Activated CD8-positive, alpha-beta memory T cell treated with anti-CD3 and anti-CD28 coated beads, Interleukin-2, amount 10 ng/mL, durations not matched to agents 7 days and 5 days (primary cell): ENCODE measurements at regions of chr4 and their contacts with region 1.

Region 1: DNA sequence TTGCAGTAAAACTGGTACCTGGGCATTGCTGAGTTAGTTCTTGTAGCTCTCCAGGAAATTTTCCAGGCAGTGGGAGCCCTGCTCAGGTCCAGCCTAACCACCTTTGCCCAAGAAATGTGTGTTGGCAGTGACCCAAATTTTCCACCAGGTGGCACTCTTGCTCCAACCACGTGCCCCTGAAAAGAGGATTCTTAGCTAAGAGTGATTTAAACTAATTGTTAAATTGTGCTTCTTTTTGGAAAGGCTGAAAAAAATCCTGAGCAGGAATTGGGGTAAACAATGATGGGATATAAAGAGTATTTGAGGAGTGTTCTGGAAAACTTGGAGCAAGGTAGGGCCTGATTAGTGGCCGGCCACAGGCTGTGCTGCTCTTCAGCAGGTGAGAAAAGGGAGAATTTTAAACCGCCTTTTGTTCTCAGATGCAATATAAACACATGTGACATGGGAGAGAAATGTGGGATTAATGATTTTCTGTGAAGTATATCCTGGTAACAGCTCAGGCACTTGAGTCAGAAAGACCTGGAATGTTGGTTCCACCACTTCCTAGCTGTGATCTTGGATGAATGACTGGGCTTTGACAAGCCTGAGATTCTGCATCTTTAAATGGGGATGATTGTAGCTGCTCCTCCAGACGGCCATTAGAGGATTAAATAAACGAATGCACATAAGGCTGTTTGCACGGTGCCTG is 219.6 kb downstream of the PTTG2 start:
- DNase-seq: peak; percentile 78
- ATAC-seq: peak; percentile 52
- H3K4me3 Mint-ChIP-seq: no peak overlapping the region
- H3K27ac Mint-ChIP-seq: no peak overlapping the region
- H3K4me1 Mint-ChIP-seq: peaks cover 30% of the 10 kb centered on the region
- H3K27me3 Mint-ChIP-seq: peaks cover 36% of the 10 kb centered on the region

Region 2: DNA sequence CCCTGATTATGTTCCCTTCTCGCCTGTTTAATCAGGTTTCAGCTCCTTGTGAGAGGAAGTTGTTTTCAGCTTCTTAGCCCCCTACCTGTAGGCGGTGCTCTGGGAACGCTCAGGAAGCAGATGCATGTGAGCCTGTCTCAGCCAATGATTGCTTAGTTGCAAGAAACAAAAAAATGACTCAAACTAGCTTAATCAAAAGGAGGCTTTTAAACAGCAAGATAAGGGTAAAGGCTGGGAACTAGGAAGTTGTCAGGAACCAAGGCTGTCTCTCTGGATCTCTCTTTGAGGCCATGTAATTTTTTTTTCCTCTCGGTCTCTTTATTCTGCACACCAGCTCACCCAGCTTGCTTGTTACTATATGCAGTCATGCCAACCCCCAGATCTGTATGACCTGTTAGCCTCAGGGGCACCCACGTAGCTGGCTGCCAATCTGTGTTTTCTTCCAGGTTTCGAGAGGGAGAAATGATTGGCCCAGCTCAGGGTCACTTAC is 110.5 kb before region 1 on chr4:
- CTCF ChIA-PET with region 1: interaction called, 10 read pairs
- DNase-seq: no peak
- ATAC-seq: no peak
- H3K4me3 Mint-ChIP-seq: no peak overlapping the region
- H3K27ac Mint-ChIP-seq: no peak overlapping the region
- H3K4me1 Mint-ChIP-seq: peaks cover 15% of the 10 kb centered on the region
- H3K27me3 Mint-ChIP-seq: no peaks in the 10 kb centered on the region

Region 3: GRCh38 chr4:38154681-38155608 is 24.9 kb before region 1 on chr4:
- CTCF ChIA-PET with region 1: interaction called, 14 read pairs
- DNase-seq: peak; percentile 50
- ATAC-seq: peak; percentile 48
- H3K4me3 Mint-ChIP-seq: no peak overlapping the region
- H3K27ac Mint-ChIP-seq: peak overlapping the region; percentile 50
- H3K4me1 Mint-ChIP-seq: peaks cover 26% of the 10 kb centered on the region
- H3K27me3 Mint-ChIP-seq: peaks cover 9% of the 10 kb centered on the region

Region 4: DNA sequence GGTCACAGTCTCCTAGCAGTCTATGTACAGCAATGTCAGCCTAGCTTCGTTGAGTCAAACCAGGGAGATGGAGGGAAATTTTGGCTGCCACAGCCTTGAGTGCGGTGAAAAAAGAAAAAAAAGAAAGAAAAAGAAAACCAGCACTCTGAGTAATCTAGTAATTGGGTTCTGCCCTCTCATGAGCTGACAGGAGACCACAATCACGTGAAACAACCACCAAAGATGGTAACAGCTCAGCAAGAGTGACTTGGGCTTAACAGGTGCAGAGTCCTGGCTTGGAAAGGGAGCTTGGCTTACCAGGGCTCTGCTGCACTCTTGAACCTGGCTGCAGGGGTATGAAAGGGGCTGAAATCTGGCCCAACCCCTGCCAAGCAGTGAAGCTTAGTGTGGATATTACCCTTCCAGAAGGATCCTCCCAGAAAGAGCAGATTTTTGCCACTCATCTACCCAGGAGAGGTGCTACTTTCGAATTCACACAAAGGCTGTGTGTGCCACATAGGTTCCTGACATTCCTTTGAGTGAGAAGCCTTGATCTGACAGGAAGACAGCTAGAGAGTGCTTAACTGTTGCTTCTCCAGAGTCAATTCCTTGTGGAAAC is 130.7 kb after region 1 on chr4:
- CTCF ChIA-PET with region 1: interaction called, 11 read pairs
- DNase-seq: peak; percentile 93
- ATAC-seq: peak; percentile 92
- H3K4me3 Mint-ChIP-seq: peak overlapping the region; percentile 40
- H3K27ac Mint-ChIP-seq: peak overlapping the region; percentile 80
- H3K4me1 Mint-ChIP-seq: peaks cover 62% of the 10 kb centered on the region
- H3K27me3 Mint-ChIP-seq: peaks cover 44% of the 10 kb centered on the region

Region 5: GRCh38 chr4:38663801-38664705 is 484.2 kb after region 1 on chr4 and contains the start of gene KLF3:
- CTCF ChIA-PET with region 1: interaction called, 14 read pairs
- DNase-seq: peak; percentile 84
- ATAC-seq: peak; percentile 87
- H3K4me3 Mint-ChIP-seq: peak within 1 kb of the TSS; percentile 73
- H3K27ac Mint-ChIP-seq: peak within 1 kb of the TSS; percentile 61
- H3K4me1 Mint-ChIP-seq: peaks cover 34% of the 10 kb centered on the region
- H3K27me3 Mint-ChIP-seq: peaks cover 50% of the 10 kb centered on the region
- total RNA-seq, gene KLF3: 2.6 to 3.5 TPM

Region 6: DNA sequence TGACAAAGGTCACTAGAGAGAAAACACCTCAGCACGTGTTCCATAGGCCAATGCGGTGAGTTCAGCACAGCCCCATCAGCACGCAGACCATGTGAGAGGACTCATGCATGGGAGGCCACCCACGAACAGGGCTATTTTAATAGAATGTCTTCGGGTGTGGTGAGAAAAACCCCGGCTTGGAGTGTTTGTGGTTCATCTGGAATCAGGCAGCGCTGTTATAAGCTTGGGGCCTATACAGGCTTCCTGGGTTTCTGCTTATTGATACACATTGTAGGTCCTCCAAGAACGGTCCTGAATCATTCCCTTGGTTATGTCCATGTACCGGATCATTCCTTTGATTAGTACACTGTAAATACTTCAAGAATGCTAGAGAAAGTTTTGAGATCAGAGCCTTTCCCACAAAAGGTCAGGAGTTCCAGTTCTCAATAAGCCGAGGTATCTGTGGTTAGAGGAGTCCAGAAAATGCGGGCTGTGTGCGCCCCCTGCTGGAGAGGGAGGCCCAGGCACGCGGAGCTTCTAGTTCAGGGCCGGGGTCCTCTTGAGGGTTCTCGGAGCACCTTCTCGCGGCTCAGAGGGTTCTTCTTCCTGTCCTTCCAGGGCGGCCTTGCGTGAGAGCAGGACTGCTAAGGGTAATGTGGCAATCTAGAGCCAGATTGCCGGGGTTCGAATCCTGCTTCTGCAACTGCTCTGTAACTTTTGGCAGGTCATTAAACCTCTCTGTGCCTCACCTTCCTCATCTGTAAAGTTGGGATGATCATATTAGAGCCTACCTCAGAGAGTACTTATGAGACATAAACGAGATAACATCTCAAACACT is 551.2 kb after region 1 on chr4:
- CTCF ChIA-PET with region 1: interaction called, 41 read pairs
- DNase-seq: peak; percentile 77
- ATAC-seq: peak; percentile 64
- H3K4me3 Mint-ChIP-seq: no peak overlapping the region
- H3K27ac Mint-ChIP-seq: no peak overlapping the region
- H3K4me1 Mint-ChIP-seq: peaks cover 10% of the 10 kb centered on the region
- H3K27me3 Mint-ChIP-seq: peaks cover 32% of the 10 kb centered on the region

Region 7: DNA sequence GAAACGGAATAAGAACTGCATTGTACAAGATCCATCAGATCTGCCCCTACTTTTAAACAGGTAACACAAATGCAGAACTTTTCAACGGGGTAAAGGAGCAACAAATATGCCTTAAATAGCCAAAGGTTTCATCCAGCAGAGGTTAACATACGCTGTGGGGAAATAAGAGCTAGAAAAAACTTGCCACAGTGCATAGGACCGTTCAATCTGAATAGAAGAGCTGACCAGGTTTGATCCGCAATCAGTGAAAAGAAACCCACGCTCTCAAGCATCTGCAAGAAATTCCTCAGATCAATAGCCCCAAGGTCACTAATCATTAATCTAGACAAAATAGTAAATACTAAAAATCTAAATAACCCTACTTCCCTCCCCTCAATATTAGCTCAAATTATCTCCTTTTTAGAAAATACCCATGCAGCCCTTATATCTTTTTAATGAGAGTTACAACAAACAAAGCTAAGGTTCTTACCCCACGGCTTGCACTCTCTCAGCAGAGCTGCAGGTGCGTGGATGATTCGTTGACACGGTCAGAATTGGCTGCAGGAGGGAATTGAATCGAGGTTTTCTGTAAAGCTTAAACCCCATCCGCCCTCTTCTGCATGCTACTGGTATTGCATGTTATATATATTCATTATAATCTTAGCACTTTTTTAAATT is 602.7 kb after region 1 on chr4 and contains the start of gene TLR10:
- CTCF ChIA-PET with region 1: interaction called, 17 read pairs
- DNase-seq: peak; percentile 51
- ATAC-seq: peak; percentile 39
- H3K4me3 Mint-ChIP-seq: no peak within 1 kb of the TSS
- H3K27ac Mint-ChIP-seq: no peak within 1 kb of the TSS
- H3K4me1 Mint-ChIP-seq: peaks cover 4% of the 10 kb centered on the region
- H3K27me3 Mint-ChIP-seq: peaks cover 16% of the 10 kb centered on the region
- total RNA-seq, gene TLR10: 0.09 TPM in 1 of 2 experiments, not detected in the other

Region 8: GRCh38 chr4:39357002-39357401 is 1177.2 kb after region 1 on chr4:
- CTCF ChIA-PET with region 1: no interaction called
- DNase-seq: no peak
- ATAC-seq: no peak
- H3K4me3 Mint-ChIP-seq: no peak overlapping the region
- H3K27ac Mint-ChIP-seq: peak overlapping the region; percentile 77
- H3K4me1 Mint-ChIP-seq: peaks cover 56% of the 10 kb centered on the region
- H3K27me3 Mint-ChIP-seq: no peaks in the 10 kb centered on the region